ENCODE measurements at regions of chr6 and their contacts with region 1.

Region 1: DNA sequence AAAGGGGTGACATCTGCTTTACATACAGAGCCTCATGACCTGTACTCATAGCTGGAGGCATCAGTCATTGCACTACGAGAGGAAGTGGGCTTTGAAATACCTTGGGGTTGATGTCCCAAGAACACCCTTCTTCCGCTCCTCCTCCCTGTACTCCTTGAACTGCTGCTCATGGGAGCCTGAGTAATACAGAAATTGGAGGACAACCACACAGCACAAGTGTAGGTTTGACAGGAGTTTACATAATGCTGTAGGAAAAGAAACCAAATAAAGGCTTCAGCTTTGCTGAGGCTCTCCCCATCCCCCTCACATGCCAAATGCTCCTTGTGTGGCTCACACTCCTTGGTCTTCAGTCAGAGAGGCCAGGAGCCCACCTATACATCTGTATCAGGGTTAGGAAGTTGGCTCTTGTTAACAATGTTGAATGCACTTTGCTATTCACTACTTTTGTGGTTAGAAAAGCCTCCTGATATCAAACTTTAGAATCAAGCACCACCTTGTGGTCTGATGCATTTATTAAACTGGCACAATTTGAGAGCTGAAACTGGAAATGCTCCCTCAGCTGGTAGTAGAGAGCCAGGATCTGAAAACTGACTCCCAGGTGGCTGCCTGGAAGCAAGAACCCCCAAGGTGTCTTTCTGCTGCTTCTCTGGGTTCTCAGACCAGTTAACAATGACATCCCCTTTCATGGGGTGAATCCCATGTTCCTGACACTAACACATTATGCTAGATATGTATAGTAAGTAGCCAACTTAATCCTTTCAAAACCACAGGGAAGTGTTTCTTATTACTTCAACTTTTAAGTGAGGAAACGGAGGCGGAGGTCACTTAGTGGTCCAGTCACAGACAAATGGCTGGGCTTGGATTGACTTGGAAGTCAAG is 56.2 kb upstream of the EDN1 start:
- DNase-seq: peak; percentile 70
- H3K4me3 Mint-ChIP-seq: no peak overlapping the region
- H3K27ac Mint-ChIP-seq: no peak overlapping the region
- H3K4me1 Mint-ChIP-seq: peaks cover 35% of the 10 kb centered on the region
- H3K27me3 Mint-ChIP-seq: no peaks in the 10 kb centered on the region

Region 2: GRCh38 chr6:11653028-11653583 is 580.8 kb before region 1 on chr6:
- CTCF ChIA-PET with region 1: interaction called, 11 read pairs
- POLR2A ChIA-PET with region 1: no interaction called
- intact Hi-C with region 1: loop called (anchors 2 kb)
- DNase-seq: peak; percentile 71
- H3K4me3 Mint-ChIP-seq: no peak overlapping the region
- H3K27ac Mint-ChIP-seq: no peak overlapping the region
- H3K4me1 Mint-ChIP-seq: peaks cover 13% of the 10 kb centered on the region
- H3K27me3 Mint-ChIP-seq: peaks cover 9% of the 10 kb centered on the region

Region 3: DNA sequence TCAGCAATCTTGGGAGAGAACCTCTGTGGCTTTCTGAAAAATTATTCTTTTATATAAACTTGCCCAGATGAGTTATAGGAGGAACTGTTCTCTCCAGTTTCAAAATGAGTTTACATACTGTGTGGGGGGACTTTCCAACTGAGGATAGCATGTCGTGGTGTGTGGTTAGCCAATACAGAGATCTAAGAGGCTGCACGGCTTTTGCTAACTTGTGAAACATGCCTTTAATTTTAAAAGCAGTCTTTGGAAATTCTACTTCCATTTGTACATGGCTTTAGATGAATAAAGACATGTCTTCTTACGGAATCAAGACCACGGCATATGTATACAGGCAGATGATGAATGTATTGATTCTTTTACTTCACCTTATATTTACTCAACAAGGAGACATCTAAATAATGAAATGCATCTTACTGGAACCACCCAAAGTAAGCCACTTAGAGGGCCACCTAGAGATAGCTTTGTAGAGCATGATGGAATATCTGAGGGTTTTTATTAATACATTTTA is 182.0 kb before region 1 on chr6:
- CTCF ChIA-PET with region 1: interaction called, 4 read pairs
- POLR2A ChIA-PET with region 1: no interaction called
- intact Hi-C with region 1: loop called (anchors 2 kb)
- DNase-seq: peak; percentile 78
- H3K4me3 Mint-ChIP-seq: peak overlapping the region; percentile 13
- H3K27ac Mint-ChIP-seq: peak overlapping the region; percentile 84
- H3K4me1 Mint-ChIP-seq: peaks cover 73% of the 10 kb centered on the region
- H3K27me3 Mint-ChIP-seq: no peaks in the 10 kb centered on the region

Region 4: GRCh38 chr6:12163149-12163548 is 70.8 kb before region 1 on chr6:
- CTCF ChIA-PET with region 1: interaction called, 5 read pairs
- POLR2A ChIA-PET with region 1: no interaction called
- intact Hi-C with region 1: loop called (anchors 5 kb)
- DNase-seq: peak; percentile 54
- H3K4me3 Mint-ChIP-seq: no peak overlapping the region
- H3K27ac Mint-ChIP-seq: no peak overlapping the region
- H3K4me1 Mint-ChIP-seq: peaks cover 36% of the 10 kb centered on the region
- H3K27me3 Mint-ChIP-seq: no peaks in the 10 kb centered on the region

Region 5: GRCh38 chr6:12289933-12290820 is 56.2 kb after region 1 on chr6 and contains the start of gene EDN1:
- CTCF ChIA-PET with region 1: interaction called, 15 read pairs
- POLR2A ChIA-PET with region 1: no interaction called
- intact Hi-C with region 1: loop called (anchors 2 kb)
- DNase-seq: peak; percentile 70
- H3K4me3 Mint-ChIP-seq: peak within 1 kb of the TSS; percentile 68
- H3K27ac Mint-ChIP-seq: no peak within 1 kb of the TSS
- H3K4me1 Mint-ChIP-seq: peaks cover 16% of the 10 kb centered on the region
- H3K27me3 Mint-ChIP-seq: peaks cover 36% of the 10 kb centered on the region
- total RNA-seq, gene EDN1: not detected